Transverse colon (tissue), 4 donors: ENCODE measurements at regions of chr4 and their contacts with region 1.

Region 1: GRCh38 chr4:112636688-112637551 is at the starts of genes LARP7 and ZGRF1:
- DNase-seq: peak; percentile 99
- H3K4me3 ChIP-seq: peak within 1 kb of the TSS; percentile 43 to 86 (median 54)
- H3K27ac ChIP-seq: peak within 1 kb of the TSS; percentile 88 to 94 (median 90)
- H3K4me1 ChIP-seq: peaks cover 7 to 42% (median 12%) of the 10 kb centered on the region in 4 donors
- H3K27me3 ChIP-seq: no peaks in the 10 kb centered on the region
- CTCF ChIP-seq: peak; percentile 96 to 100 (median 98)
- EP300 ChIP-seq: no peak
- POLR2A ChIP-seq: peak; percentile 55
- total RNA-seq, gene LARP7: 33.3 to 75.4 (median 47.6) TPM
- total RNA-seq, gene ZGRF1: 0.75 to 7.3 (median 3.7) TPM

Region 2: GRCh38 chr4:112231779-112232713 is 404.9 kb before region 1 on chr4 and contains the start of gene AP1AR:
- in situ Hi-C with region 1: loop called in 1 of 4 experiments (anchors 25 kb)
- intact Hi-C with region 1: no loop called
- DNase-seq: peak; percentile 89
- H3K4me3 ChIP-seq: peak within 1 kb of the TSS; percentile 68 to 90 (median 75)
- H3K27ac ChIP-seq: peak within 1 kb of the TSS; percentile 95 to 100 (median 98)
- H3K4me1 ChIP-seq: peaks cover 0 to 35% (median 18%) of the 10 kb centered on the region in 4 donors
- H3K27me3 ChIP-seq: no peaks in the 10 kb centered on the region
- CTCF ChIP-seq: peak in 4 of 5 experiments; percentile 30 to 48 (median 38)
- EP300 ChIP-seq: no peak
- POLR2A ChIP-seq: peak; percentile 97
- total RNA-seq, gene AP1AR: 9.8 to 41.8 (median 38.7) TPM

Region 3: GRCh38 chr4:112589206-112589605 is 47.7 kb before region 1 on chr4:
- in situ Hi-C with region 1: no loop called
- intact Hi-C with region 1: no loop called
- DNase-seq: no peak
- H3K4me3 ChIP-seq: no peak overlapping the region
- H3K27ac ChIP-seq: no peak overlapping the region
- H3K4me1 ChIP-seq: no peaks in the 10 kb centered on the region
- H3K27me3 ChIP-seq: no peaks in the 10 kb centered on the region
- CTCF ChIP-seq: no peak
- EP300 ChIP-seq: no peak
- POLR2A ChIP-seq: no peak

Region 4: DNA sequence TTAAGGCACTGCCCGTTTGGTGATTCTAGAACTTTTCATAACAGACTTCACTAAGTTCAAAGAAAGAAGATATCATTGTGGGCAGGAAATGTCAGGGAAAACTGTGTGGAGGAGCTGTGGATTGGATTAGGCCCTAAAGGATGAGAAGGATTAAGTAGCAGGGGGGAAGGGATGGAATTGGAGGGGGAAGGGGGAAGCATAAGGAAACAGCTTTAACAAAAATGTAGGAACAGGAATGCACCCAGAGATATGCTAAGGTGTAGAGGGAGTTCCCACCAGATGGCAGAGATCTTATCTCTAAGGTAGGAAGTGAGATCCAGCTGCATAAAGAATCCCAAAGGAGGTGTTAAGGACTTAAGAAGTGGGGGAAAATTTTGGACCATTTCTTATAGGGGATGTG is 114.5 kb after region 1 on chr4:
- in situ Hi-C with region 1: no loop called
- intact Hi-C with region 1: loop called (anchors 10 kb)
- DNase-seq: no peak
- H3K4me3 ChIP-seq: no peak overlapping the region
- H3K27ac ChIP-seq: no peak overlapping the region
- H3K4me1 ChIP-seq: no peaks in the 10 kb centered on the region
- H3K27me3 ChIP-seq: no peaks in the 10 kb centered on the region
- CTCF ChIP-seq: no peak
- EP300 ChIP-seq: no peak
- POLR2A ChIP-seq: no peak

Region 5: DNA sequence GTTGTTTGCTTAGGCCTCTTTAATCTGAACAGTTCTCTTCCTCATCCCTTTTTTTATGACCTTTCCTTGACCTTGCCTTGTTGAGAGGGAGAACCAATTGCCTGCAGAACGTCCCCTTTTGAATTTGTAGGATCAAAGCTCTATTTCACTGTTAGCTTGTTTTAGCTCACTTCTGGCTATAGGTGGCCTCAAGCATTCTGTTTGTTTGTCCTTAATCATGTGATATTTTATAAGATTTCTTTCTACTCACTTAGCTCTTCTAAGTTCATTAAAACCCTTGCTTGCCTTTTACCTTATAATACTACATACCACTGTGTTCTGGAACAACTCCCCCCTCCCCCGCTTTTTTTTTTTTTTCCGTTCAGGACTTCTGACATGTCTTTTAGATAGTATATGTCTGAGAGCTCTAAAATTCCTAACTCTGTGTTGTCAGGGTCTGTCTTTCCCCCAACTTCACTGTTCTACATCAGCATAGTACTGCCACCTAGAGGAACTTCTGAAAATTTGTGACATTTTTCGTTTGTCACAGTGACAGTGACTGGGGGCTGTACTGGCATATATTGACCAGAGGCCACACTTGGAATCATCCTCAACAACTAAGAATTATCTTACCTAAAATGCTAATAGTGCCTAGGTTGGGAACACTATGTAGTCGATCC is 128.5 kb after region 1 on chr4:
- in situ Hi-C with region 1: loop called in 1 of 4 experiments (anchors 10 kb)
- intact Hi-C with region 1: no loop called
- DNase-seq: no peak
- H3K4me3 ChIP-seq: no peak overlapping the region
- H3K27ac ChIP-seq: no peak overlapping the region
- H3K4me1 ChIP-seq: peaks cover 0 to 4% (median 0%) of the 10 kb centered on the region in 4 donors
- H3K27me3 ChIP-seq: no peaks in the 10 kb centered on the region
- CTCF ChIP-seq: peak in 3 of 5 experiments; percentile 15 to 31 (median 24)
- EP300 ChIP-seq: no peak
- POLR2A ChIP-seq: no peak

Region 6: DNA sequence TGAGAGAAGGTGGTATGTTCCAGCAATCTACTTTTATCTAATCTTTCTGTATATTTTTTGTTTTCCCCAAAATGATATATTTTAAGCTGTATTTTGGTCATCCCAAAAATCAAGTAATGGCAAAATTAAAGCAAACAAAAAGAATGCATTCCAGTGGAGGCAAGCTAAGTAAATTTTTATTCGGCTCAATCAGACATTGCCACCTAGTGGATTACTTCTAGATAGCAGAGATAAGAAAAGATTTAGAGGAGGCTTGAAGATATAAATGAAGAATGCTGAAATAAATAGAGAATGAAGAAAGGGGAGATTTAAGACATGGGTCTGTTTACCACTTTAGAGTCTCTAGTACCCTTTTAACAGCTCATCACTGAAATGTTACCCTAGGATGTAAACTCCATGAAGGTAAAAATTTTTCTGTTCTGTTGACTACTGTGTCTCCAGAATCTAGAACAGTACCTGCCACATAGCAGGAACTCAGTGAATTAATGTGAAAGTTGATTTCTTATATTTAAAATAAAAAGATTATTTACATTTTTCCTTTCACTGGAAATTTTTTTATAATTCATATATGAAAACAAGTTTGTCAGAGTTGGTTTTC is 301.6 kb after region 1 on chr4:
- in situ Hi-C with region 1: loop called in 3 of 4 experiments (anchors 25 kb)
- intact Hi-C with region 1: loop called (anchors 10 kb)
- DNase-seq: no peak
- H3K4me3 ChIP-seq: no peak overlapping the region
- H3K27ac ChIP-seq: no peak overlapping the region
- H3K4me1 ChIP-seq: no peaks in the 10 kb centered on the region
- H3K27me3 ChIP-seq: no peaks in the 10 kb centered on the region
- CTCF ChIP-seq: peak; percentile 43 to 67 (median 57)
- EP300 ChIP-seq: no peak
- POLR2A ChIP-seq: no peak

Region 7: DNA sequence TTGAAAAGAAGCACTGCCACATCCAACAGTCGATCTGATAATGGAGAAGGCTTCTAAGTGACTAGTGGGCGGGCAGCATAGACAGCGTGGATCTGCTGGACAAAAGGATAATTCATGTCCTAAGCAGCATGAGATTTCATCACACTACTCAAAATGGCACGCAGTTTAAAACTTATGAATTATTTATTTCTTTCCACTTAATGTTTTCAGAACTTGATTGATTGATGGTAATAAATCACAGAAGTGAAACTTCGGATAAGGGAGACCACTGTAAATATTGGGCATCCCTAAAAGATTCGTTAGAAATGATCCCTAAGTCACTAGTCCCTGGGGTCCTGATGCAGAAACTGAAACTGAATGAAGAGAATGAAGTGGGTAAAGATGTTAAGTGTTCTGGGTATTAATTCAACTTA is 319.6 kb after region 1 on chr4:
- in situ Hi-C with region 1: no loop called
- intact Hi-C with region 1: no loop called
- DNase-seq: no peak
- H3K4me3 ChIP-seq: no peak overlapping the region
- H3K27ac ChIP-seq: no peak overlapping the region
- H3K4me1 ChIP-seq: no peaks in the 10 kb centered on the region
- H3K27me3 ChIP-seq: no peaks in the 10 kb centered on the region
- CTCF ChIP-seq: no peak
- EP300 ChIP-seq: no peak
- POLR2A ChIP-seq: no peak